ENCODE measurements at regions of chr13 and their contacts with region 1.

Region 1: GRCh38 chr13:33285420-33286124 is at the start of gene STARD13:
- DNase-seq: peak; percentile 98
- ATAC-seq: peak; percentile 84
- H3K4me3 ChIP-seq: peak within 1 kb of the TSS; percentile 68
- H3K27ac ChIP-seq: peak within 1 kb of the TSS; percentile 97
- H3K4me1 ChIP-seq: peaks cover 17% of the 10 kb centered on the region
- H3K27me3 ChIP-seq: no peaks in the 10 kb centered on the region
- CTCF ChIP-seq: peak; percentile 64
- POLR2A ChIP-seq: peak; percentile 99
- RAD21 ChIP-seq: peak; percentile 60
- total RNA-seq, gene STARD13: 46.6 and 46.9 TPM in 2 replicates

Region 2: DNA sequence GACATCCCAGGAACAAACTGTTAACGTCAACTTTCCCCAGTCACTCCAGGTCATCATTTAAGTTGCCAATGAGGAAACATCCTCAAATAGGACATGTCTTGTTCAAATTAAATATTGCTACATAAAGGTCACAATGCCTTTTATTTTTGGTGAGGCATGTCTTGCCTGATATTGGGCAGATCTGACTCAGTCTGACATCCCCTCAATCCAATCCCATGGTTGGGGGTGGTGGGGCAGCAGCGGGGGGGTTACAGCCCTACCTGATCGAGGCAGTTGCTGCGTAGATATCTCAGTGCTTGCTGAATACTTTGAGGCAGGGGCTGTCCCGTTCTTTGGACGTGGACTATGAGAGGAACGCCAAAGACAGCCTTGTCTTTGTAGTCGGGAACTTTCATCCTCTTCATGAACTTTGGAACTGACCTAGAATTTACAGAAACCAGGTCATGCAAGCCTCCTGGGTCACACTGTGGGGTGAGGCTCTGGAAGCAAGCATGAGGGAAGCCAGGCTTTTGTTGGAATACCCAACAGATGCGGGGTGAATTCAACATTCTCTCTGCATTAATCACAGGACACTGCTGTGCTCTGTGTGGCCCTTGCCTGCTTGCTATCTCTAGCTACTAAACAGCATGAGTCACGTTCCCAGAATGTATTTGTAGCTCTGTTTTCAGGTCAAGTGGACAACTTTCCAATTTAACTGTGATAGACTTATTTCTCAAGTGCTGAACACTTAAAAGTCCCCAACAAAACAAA is 159.6 kb before region 1 on chr13:
- CTCF ChIA-PET with region 1: interaction called, 3 read pairs
- POLR2A ChIA-PET with region 1: no interaction called
- dilution Hi-C with region 1: no loop called
- in situ Hi-C with region 1: no loop called
- intact Hi-C with region 1: loop called (anchors 5 kb)
- DNase-seq: peak; percentile 97
- ATAC-seq: peak; percentile 85
- H3K4me3 ChIP-seq: no peak overlapping the region
- H3K27ac ChIP-seq: peak overlapping the region; percentile 80
- H3K4me1 ChIP-seq: peaks cover 30% of the 10 kb centered on the region
- H3K27me3 ChIP-seq: no peaks in the 10 kb centered on the region
- CTCF ChIP-seq: no peak
- POLR2A ChIP-seq: no peak
- RAD21 ChIP-seq: peak; percentile 9; the same call in 1 of the 2 replicates

Region 3: GRCh38 chr13:33228648-33229445 is 56.7 kb before region 1 on chr13:
- CTCF ChIA-PET with region 1: no interaction called
- POLR2A ChIA-PET with region 1: interaction called, 4 read pairs
- dilution Hi-C with region 1: no loop called
- in situ Hi-C with region 1: no loop called
- intact Hi-C with region 1: loop called (anchors 2 kb)
- DNase-seq: peak; percentile 83
- ATAC-seq: peak; percentile 46
- H3K4me3 ChIP-seq: peak overlapping the region; percentile 2; the same call in 1 of the 2 replicates
- H3K27ac ChIP-seq: peak overlapping the region; percentile 97
- H3K4me1 ChIP-seq: peaks cover 29% of the 10 kb centered on the region
- H3K27me3 ChIP-seq: no peaks in the 10 kb centered on the region
- CTCF ChIP-seq: peak; percentile 82
- POLR2A ChIP-seq: 0 out of 2 replicates have a peak, but pooled peaks have one; percentile 27
- RAD21 ChIP-seq: peak; percentile 83

Region 4: DNA sequence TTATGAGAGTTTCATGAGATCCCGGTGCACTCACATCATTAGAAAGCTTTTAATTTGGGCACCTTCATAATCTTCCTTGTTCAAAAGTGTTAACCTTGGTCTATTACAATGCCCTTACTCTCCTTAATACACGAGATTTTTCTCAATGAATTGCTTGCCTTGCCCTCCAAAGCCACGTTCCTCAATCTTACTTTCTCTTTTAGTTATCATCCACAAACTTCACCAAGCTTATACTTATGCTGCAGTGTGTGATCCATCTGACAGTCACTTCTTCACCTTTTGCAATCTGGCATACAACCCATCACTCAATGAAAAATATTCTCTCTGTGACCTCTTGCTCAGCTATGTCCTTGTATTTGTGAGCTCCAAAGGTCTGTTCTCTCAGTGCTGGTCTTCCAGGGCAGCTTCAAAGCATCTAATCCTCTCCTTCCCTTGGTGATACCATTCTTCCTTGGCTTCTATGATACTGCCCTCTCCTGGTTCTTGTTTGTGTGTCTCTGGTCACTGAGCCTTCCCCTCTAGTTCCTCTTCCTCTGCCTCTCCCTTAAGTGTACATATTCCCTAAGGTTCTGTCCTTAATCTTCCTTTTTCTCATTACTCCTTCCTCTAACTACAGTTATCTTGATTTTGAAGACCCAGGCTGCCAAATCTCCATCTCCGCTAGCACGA is 202.1 kb after region 1 on chr13:
- CTCF ChIA-PET with region 1: no interaction called
- POLR2A ChIA-PET with region 1: no interaction called
- dilution Hi-C with region 1: no loop called
- in situ Hi-C with region 1: no loop called
- intact Hi-C with region 1: loop called (anchors 5 kb)
- DNase-seq: peak; percentile 65
- ATAC-seq: peak; percentile 91
- H3K4me3 ChIP-seq: peak overlapping the region; percentile 8; the same call in 1 of the 2 replicates
- H3K27ac ChIP-seq: no peak overlapping the region
- H3K4me1 ChIP-seq: peaks cover 1% of the 10 kb centered on the region; the same call in 1 of the 2 replicates
- H3K27me3 ChIP-seq: no peaks in the 10 kb centered on the region
- CTCF ChIP-seq: peak; percentile 52
- POLR2A ChIP-seq: no peak
- RAD21 ChIP-seq: peak; percentile 62

Region 5: GRCh38 chr13:33610471-33611015 is 325.0 kb after region 1 on chr13:
- CTCF ChIA-PET with region 1: no interaction called
- POLR2A ChIA-PET with region 1: no interaction called
- dilution Hi-C with region 1: no loop called
- in situ Hi-C with region 1: no loop called
- intact Hi-C with region 1: no loop called
- DNase-seq: no peak
- ATAC-seq: peak; percentile 57
- H3K4me3 ChIP-seq: no peak overlapping the region
- H3K27ac ChIP-seq: peak overlapping the region; percentile 78
- H3K4me1 ChIP-seq: peaks cover 5% of the 10 kb centered on the region
- H3K27me3 ChIP-seq: no peaks in the 10 kb centered on the region
- CTCF ChIP-seq: no peak
- POLR2A ChIP-seq: no peak
- RAD21 ChIP-seq: no peak

Measured in IMR-90 (cell line).